ENCODE measurements at regions of chr2 and their contacts with region 1.

Region 1: DNA sequence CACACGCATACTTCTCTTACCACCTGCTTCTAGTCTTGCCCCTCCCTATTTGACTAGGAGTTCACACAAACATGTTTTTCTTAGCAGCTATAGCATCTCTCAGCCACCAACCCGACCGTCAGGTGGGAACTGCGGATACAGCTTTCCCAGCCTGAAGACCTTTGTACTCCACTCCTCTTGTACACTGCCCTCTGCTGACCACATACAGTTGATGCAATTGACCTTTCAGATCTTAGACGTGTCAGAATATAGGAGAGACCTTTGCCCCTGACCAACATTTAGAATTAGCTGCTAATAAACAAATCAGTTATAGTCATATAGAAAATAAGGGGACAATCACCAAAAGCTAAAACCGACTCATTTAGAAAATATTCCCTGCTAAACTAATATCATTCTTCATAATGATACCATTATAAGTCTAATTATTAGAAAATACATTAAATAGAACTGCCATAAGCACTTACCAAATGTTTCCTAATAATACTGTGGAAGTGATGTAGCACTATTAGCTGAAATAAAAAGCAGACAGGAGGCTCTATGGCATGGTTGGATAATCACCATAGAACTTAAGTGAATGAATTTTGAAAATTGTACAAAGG is 208.4 kb downstream of the RAD51AP2 start:
- DNase-seq: peak in 28 of 42 donors; percentile 7 to 77 (median 42)

Region 2: GRCh38 chr2:16773080-16773713 is 536.6 kb before region 1 on chr2:
- intact Hi-C with region 1: loop called (anchors 5 kb)
- DNase-seq: peak in 41 of 42 donors; percentile 22 to 82 (median 62)

Region 3: GRCh38 chr2:17171446-17172049 is 138.3 kb before region 1 on chr2:
- intact Hi-C with region 1: loop called (anchors 10 kb)
- DNase-seq: peak in 41 of 42 donors; percentile 11 to 77 (median 46)

Region 4: GRCh38 chr2:17401096-17401495 is 91.3 kb after region 1 on chr2:
- intact Hi-C with region 1: no loop called
- DNase-seq: no peak

Measured in head of caudate nucleus (tissue), 42 donors.